Mammary epithelial cell (primary cell): ENCODE measurements at regions of chr3 and their contacts with region 1.

Region 1: DNA sequence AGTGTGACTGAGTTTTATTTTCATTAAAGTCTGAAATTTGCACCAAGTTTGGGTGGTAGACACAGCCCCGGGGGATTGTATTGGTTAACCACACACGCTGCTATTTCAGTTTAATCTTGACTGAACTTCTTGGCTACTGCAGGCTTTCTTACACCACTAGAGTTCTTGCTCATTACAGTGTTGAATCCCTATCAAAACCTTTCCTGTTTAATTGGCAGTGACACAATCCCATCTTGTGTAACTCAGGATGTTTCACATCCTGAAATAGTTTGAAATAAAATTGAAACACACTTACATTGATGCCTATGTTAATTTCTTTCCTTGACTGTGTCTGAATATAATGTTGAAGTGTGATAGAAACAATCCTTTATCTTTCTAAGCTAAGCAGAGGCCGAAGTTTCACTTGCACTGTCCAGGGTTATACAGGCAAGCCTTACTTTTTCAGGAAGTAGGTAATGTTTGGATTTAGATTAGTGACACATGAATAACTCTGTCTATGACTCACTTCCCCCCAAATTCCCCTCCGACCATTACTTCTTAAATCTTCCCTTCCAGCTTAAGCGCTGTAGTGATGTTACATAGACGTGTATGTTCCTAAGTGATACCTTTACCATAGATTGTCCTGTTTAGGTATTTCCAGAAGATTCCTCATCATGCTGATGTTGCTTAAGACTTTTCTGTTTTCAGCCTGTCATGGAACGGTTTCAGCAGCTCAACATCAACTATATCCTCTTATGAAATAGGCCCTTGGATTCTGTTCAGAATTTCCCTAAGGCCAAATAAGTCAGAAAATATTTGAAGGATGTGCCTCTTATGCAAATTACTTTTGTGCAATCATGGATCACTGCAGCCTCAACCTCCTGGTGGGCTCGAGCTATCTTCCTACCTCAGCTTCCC is 16.8 kb downstream of the ATG7 start:
- DNase-seq: peak; percentile 93
- H3K4me3 ChIP-seq: peak overlapping the region in 1 of 3 experiments; percentile 6
- H3K27ac ChIP-seq: peak overlapping the region; percentile 96
- H3K4me1 ChIP-seq: peaks cover 45% of the 10 kb centered on the region
- H3K27me3 ChIP-seq: no peaks in the 10 kb centered on the region
- CTCF ChIP-seq: no peak

Region 2: DNA sequence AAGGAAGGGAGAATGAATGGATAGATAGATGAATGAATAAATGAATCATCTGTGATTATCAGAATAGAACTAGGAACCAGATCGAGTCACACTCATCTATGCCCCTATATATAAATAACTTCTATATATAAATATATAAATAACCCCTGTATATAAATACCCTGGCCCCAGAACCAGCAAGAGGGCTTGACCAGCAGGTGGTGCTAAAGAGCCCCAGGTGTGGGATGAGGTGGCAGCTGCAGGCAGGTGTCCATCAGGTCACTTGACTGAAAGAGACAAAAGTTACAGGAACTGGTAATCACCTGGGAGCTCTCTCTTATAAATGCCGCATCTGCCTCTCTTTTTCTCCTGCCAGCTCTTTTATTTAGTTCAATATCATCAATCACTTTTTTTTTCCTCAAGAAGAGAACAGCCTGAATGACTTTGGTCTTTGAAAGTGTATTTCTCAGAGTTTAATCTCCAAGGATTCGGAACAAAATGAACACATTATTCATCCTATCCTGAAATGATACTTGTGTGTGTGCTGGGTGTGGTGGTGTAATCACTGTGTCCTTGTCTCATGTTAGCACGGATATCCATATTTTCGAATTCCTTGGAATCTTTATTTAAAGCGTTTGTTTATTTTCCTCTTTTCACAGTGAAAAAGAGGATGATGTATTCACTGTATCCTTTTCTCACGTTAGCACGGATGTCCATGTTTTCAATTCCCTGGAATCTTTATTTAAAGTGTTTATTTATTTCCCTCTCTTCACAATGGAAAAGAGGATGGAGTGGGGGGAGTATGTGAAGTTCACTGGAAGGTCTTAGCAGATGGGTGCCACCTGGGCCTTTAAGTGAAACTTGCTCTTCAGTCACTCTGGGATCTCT is 52.2 kb before region 1 on chr3:
- CTCF ChIA-PET with region 1: no interaction called
- dilution Hi-C with region 1: no loop called
- in situ Hi-C with region 1: no loop called
- intact Hi-C with region 1: loop called (anchors 1 kb)
- DNase-seq: peak; percentile 68
- H3K4me3 ChIP-seq: no peak overlapping the region
- H3K27ac ChIP-seq: no peak overlapping the region
- H3K4me1 ChIP-seq: peaks cover 30% of the 10 kb centered on the region
- H3K27me3 ChIP-seq: no peaks in the 10 kb centered on the region
- CTCF ChIP-seq: peak; percentile 86 to 92

Region 3: GRCh38 chr3:11271986-11272904 is 16.8 kb before region 1 on chr3 and contains the start of gene ATG7:
- CTCF ChIA-PET with region 1: no interaction called
- dilution Hi-C with region 1: no loop called
- in situ Hi-C with region 1: no loop called
- intact Hi-C with region 1: loop called (anchors 1 kb)
- DNase-seq: peak; percentile 92
- H3K4me3 ChIP-seq: peak within 1 kb of the TSS; percentile 83 to 91 (median 91)
- H3K27ac ChIP-seq: peak within 1 kb of the TSS; percentile 96
- H3K4me1 ChIP-seq: peaks cover 13% of the 10 kb centered on the region
- H3K27me3 ChIP-seq: no peaks in the 10 kb centered on the region
- CTCF ChIP-seq: peak in 1 of 2 donors; percentile 12
- total RNA-seq, gene ATG7: 35.3 to 51.2 TPM

Region 4: GRCh38 chr3:11335056-11335608 is 46.1 kb after region 1 on chr3:
- CTCF ChIA-PET with region 1: interaction called, 12 read pairs
- dilution Hi-C with region 1: no loop called
- in situ Hi-C with region 1: no loop called
- intact Hi-C with region 1: no loop called
- DNase-seq: peak; percentile 62
- H3K4me3 ChIP-seq: no peak overlapping the region
- H3K27ac ChIP-seq: no peak overlapping the region
- H3K4me1 ChIP-seq: peaks cover 3% of the 10 kb centered on the region
- H3K27me3 ChIP-seq: no peaks in the 10 kb centered on the region
- CTCF ChIP-seq: peak; percentile 63 to 70